Mammary epithelial cell (primary cell): ENCODE measurements at regions of chr12 and their contacts with region 1.

Region 1: GRCh38 chr12:27123642-27124041 is 41.3 kb upstream of the C12orf71 start:
- DNase-seq: peak; percentile 21
- H3K4me3 ChIP-seq: no peak overlapping the region
- H3K27ac ChIP-seq: no peak overlapping the region
- H3K4me1 ChIP-seq: no peaks in the 10 kb centered on the region
- H3K27me3 ChIP-seq: no peaks in the 10 kb centered on the region
- CTCF ChIP-seq: peak in 1 of 2 donors; percentile 52

Region 2: GRCh38 chr12:27024291-27024690 is 99.4 kb before region 1 on chr12:
- CTCF ChIA-PET with region 1: no interaction called
- dilution Hi-C with region 1: no loop called
- in situ Hi-C with region 1: loop called in 1 of 2 experiments (anchors 10 kb)
- intact Hi-C with region 1: no loop called
- DNase-seq: no peak
- H3K4me3 ChIP-seq: peak overlapping the region in 1 of 3 experiments; percentile 3
- H3K27ac ChIP-seq: no peak overlapping the region
- H3K4me1 ChIP-seq: peaks cover 20% of the 10 kb centered on the region
- H3K27me3 ChIP-seq: no peaks in the 10 kb centered on the region
- CTCF ChIP-seq: no peak

Region 3: DNA sequence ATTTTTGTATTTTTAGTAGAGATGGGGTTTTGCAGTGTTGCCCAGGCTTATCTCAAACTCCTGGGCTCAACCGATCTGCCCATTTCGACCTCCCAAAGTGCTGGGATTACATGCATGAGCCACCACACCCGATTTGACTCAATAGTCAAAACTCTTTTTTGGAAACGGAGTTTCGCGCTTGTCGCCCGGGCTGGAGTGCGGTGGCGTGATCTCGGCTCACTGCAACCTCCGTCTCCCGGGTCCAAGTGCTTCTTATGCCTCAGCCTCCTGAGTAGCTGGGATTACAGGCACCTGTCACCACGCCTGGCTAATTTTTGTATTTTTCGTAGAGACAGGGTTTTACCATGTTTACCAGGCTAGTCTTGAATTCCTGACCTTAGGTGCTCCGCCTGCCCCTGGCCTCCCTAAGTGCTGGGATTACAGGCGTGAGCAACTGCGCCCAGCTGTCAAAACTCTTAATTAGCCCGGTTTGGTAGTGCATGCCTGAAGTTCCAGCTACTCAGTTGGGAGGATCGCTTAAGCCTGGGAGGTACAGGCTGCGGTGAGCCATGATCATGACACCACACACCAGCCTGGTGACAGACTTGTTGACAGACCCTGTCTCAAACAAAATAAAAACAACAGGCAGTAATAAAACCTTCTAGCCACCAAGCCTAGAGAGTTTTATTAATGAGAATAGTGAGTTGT is 88.9 kb before region 1 on chr12:
- CTCF ChIA-PET with region 1: no interaction called
- dilution Hi-C with region 1: no loop called
- in situ Hi-C with region 1: loop called (anchors 10 kb)
- intact Hi-C with region 1: loop called (anchors 1 kb)
- DNase-seq: no peak
- H3K4me3 ChIP-seq: no peak overlapping the region
- H3K27ac ChIP-seq: no peak overlapping the region
- H3K4me1 ChIP-seq: no peaks in the 10 kb centered on the region
- H3K27me3 ChIP-seq: no peaks in the 10 kb centered on the region
- CTCF ChIP-seq: no peak

Region 4: DNA sequence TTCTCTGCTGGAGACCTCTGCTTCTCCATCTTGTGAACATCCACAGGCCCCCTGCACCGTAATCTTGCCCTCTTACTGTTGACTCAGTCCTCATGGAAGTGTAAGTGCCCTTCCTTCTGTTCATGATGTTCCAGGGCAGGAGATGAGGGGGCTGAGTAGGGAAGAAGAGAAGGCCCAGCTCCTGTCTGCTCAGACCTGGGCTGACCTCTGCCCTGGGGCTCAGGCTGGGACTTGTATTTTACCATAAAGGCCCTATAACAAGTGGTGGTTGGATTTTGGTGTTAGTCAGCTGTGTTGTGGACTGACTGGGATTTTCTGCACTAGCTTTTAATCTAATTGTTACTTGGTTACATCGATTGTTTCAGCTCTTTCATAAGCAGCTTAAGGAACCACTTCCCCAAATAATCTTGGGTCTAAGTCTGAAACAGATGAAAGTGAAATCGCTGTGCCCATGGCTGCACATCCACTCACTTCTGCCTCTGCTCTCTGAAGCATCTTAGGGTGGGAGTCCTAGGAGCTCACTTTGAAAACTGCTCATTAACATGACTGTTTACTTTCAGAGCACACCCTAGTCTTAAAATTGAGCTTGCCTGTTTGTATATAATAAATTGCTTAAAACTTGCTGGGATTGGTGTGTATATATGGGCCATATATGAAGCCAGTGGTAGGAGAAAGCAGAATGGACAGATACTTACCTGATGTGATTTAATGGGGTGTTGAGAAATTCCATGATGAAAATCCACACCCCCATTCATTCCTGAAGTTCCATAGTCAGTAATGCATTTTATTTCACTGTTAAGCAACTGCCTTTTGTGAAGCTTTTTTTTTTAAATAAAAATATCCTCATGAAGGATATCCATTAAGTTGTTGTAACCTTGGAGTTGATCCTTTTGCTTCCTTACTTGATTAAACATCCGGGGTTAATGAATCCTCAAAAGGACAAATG is 59.0 kb before region 1 on chr12:
- CTCF ChIA-PET with region 1: no interaction called
- dilution Hi-C with region 1: no loop called
- in situ Hi-C with region 1: no loop called
- intact Hi-C with region 1: no loop called
- DNase-seq: no peak
- H3K4me3 ChIP-seq: no peak overlapping the region
- H3K27ac ChIP-seq: no peak overlapping the region
- H3K4me1 ChIP-seq: no peaks in the 10 kb centered on the region
- H3K27me3 ChIP-seq: no peaks in the 10 kb centered on the region
- CTCF ChIP-seq: no peak

Region 5: GRCh38 chr12:27081668-27082111 is 42.0 kb before region 1 on chr12:
- CTCF ChIA-PET with region 1: interaction called, 4 read pairs
- dilution Hi-C with region 1: no loop called
- in situ Hi-C with region 1: no loop called
- intact Hi-C with region 1: loop called (anchors 1 kb)
- DNase-seq: peak; percentile 96
- H3K4me3 ChIP-seq: no peak overlapping the region
- H3K27ac ChIP-seq: peak overlapping the region; percentile 100
- H3K4me1 ChIP-seq: peaks cover 56% of the 10 kb centered on the region
- H3K27me3 ChIP-seq: no peaks in the 10 kb centered on the region
- CTCF ChIP-seq: peak; percentile 26 to 55

Region 6: GRCh38 chr12:27305673-27306456 is 182.2 kb after region 1 on chr12:
- CTCF ChIA-PET with region 1: no interaction called
- dilution Hi-C with region 1: no loop called
- in situ Hi-C with region 1: no loop called
- intact Hi-C with region 1: loop called (anchors 5 kb)
- DNase-seq: no peak
- H3K4me3 ChIP-seq: no peak overlapping the region
- H3K27ac ChIP-seq: no peak overlapping the region
- H3K4me1 ChIP-seq: no peaks in the 10 kb centered on the region
- H3K27me3 ChIP-seq: no peaks in the 10 kb centered on the region
- CTCF ChIP-seq: peak; percentile 37 to 45